Endothelial cell of umbilical vein (primary cell): ENCODE measurements at regions of chr2 and their contacts with region 1.

Region 1: GRCh38 chr2:47386551-47386950 is 16.4 kb upstream of the MSH2 start:
- DNase-seq: no peak
- H3K4me3 ChIP-seq: no peak overlapping the region
- H3K27ac ChIP-seq: no peak overlapping the region
- H3K4me1 ChIP-seq: no peaks in the 10 kb centered on the region
- H3K27me3 ChIP-seq: peaks cover 2 to 9% of the 10 kb centered on the region in 2 experiments
- CTCF ChIP-seq: no peak
- POLR2A ChIP-seq: no peak

Region 2: GRCh38 chr2:47334356-47335136 is 52.0 kb before region 1 on chr2:
- CTCF ChIA-PET with region 1: interaction called, 617 read pairs
- POLR2A ChIA-PET with region 1: interaction called, 14 read pairs
- dilution Hi-C with region 1: no loop called
- intact Hi-C with region 1: loop called (anchors 1 kb)
- DNase-seq: peak; percentile 52
- H3K4me3 ChIP-seq: no peak overlapping the region
- H3K27ac ChIP-seq: no peak overlapping the region
- H3K4me1 ChIP-seq: no peaks in the 10 kb centered on the region
- H3K27me3 ChIP-seq: no peaks in the 10 kb centered on the region
- CTCF ChIP-seq: no peak
- POLR2A ChIP-seq: no peak

Region 3: GRCh38 chr2:47344890-47345589 is 41.5 kb before region 1 on chr2:
- CTCF ChIA-PET with region 1: interaction called, 46 read pairs
- POLR2A ChIA-PET with region 1: interaction called, 5 read pairs
- dilution Hi-C with region 1: no loop called
- intact Hi-C with region 1: no loop called
- DNase-seq: peak; percentile 93
- H3K4me3 ChIP-seq: peak overlapping the region; percentile 43 to 70 (median 63)
- H3K27ac ChIP-seq: peak overlapping the region; percentile 84
- H3K4me1 ChIP-seq: peaks cover 15% of the 10 kb centered on the region
- H3K27me3 ChIP-seq: no peaks in the 10 kb centered on the region
- CTCF ChIP-seq: peak in 1 of 2 donors; percentile 16
- POLR2A ChIP-seq: peak; percentile 91

Region 4: DNA sequence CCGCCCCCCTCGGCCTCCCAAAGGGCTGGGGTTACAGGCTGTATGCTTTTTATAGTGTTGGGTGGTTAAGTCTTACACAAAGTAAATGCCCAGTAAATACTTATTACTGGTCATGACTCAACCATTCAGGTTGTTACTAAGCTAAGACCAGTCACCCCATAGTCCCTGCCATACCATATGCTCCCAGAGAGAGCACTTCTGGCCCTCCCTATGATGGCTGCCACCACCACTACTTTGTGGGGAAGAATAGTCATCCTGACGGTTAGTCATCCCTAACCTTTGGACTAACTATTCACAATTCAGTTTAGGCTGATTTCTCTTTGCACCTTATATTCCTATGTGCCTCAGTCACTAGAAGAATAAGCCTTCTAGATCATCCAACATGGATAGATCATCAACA is 25.6 kb before region 1 on chr2:
- CTCF ChIA-PET with region 1: interaction called, 20 read pairs
- POLR2A ChIA-PET with region 1: no interaction called
- dilution Hi-C with region 1: no loop called
- intact Hi-C with region 1: no loop called
- DNase-seq: no peak
- H3K4me3 ChIP-seq: no peak overlapping the region
- H3K27ac ChIP-seq: no peak overlapping the region
- H3K4me1 ChIP-seq: no peaks in the 10 kb centered on the region
- H3K27me3 ChIP-seq: no peaks in the 10 kb centered on the region
- CTCF ChIP-seq: no peak
- POLR2A ChIP-seq: no peak

Region 5: DNA sequence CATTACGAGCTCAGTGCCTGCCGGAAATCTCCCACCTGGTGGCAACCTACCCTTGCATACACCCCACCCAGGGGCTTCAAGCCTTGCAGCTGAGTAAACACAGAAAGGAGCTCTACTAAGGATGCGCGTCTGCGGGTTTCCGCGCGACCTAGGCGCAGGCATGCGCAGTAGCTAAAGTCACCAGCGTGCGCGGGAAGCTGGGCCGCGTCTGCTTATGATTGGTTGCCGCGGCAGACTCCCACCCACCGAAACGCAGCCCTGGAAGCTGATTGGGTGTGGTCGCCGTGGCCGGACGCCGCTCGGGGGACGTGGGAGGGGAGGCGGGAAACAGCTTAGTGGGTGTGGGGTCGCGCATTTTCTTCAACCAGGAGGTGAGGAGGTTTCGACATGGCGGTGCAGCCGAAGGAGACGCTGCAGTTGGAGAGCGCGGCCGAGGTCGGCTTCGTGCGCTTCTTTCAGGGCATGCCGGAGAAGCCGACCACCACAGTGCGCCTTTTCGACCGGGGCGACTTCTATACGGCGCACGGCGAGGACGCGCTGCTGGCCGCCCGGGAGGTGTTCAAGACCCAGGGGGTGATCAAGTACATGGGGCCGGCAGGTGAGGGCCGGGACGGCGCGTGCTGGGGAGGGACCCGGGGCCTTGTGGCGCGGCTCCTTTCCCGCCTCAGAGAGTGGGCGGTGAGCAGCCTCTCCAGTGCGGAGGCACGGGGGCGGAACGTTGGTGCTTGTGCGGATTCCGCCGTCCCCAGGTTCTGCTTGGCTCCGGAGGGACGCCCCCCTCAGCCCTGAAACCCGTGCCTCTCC is 16.5 kb after region 1 on chr2 and contains the start of gene MSH2:
- CTCF ChIA-PET with region 1: interaction called, 20 read pairs
- POLR2A ChIA-PET with region 1: interaction called, 7 read pairs
- dilution Hi-C with region 1: no loop called
- intact Hi-C with region 1: no loop called
- DNase-seq: peak; percentile 96
- H3K4me3 ChIP-seq: peak within 1 kb of the TSS; percentile 46 to 80 (median 76)
- H3K27ac ChIP-seq: peak within 1 kb of the TSS; percentile 44
- H3K4me1 ChIP-seq: peaks cover 14% of the 10 kb centered on the region
- H3K27me3 ChIP-seq: no peaks in the 10 kb centered on the region
- CTCF ChIP-seq: no peak
- POLR2A ChIP-seq: peak; percentile 78
- total RNA-seq, gene MSH2: 28.0 and 30.5 TPM in 2 replicates

Region 6: GRCh38 chr2:47664817-47665216 is 278.3 kb after region 1 on chr2:
- CTCF ChIA-PET with region 1: no interaction called
- POLR2A ChIA-PET with region 1: no interaction called
- dilution Hi-C with region 1: no loop called
- intact Hi-C with region 1: no loop called
- DNase-seq: no peak
- H3K4me3 ChIP-seq: no peak overlapping the region
- H3K27ac ChIP-seq: no peak overlapping the region
- H3K4me1 ChIP-seq: no peaks in the 10 kb centered on the region
- H3K27me3 ChIP-seq: peaks cover 1 to 2% of the 10 kb centered on the region in 2 experiments
- CTCF ChIP-seq: no peak
- POLR2A ChIP-seq: no peak

Region 7: GRCh38 chr2:47697000-47697601 is 310.6 kb after region 1 on chr2:
- CTCF ChIA-PET with region 1: no interaction called
- POLR2A ChIA-PET with region 1: no interaction called
- dilution Hi-C with region 1: no loop called
- intact Hi-C with region 1: no loop called
- DNase-seq: no peak
- H3K4me3 ChIP-seq: no peak overlapping the region
- H3K27ac ChIP-seq: no peak overlapping the region
- H3K4me1 ChIP-seq: peaks cover under 1% of the 10 kb centered on the region
- H3K27me3 ChIP-seq: peaks cover 6 to 16% of the 10 kb centered on the region in 2 experiments
- CTCF ChIP-seq: no peak
- POLR2A ChIP-seq: no peak